BJ (cell line): ENCODE measurements at regions of chr12 and their contacts with region 1.

Region 1: GRCh38 chr12:98653866-98654493 is 8.9 kb downstream of the APAF1 start:
- DNase-seq: no peak
- H3K4me3 ChIP-seq: no peak overlapping the region
- H3K27me3 ChIP-seq: no peaks in the 10 kb centered on the region
- CTCF ChIP-seq: peak; percentile 62

Region 2: DNA sequence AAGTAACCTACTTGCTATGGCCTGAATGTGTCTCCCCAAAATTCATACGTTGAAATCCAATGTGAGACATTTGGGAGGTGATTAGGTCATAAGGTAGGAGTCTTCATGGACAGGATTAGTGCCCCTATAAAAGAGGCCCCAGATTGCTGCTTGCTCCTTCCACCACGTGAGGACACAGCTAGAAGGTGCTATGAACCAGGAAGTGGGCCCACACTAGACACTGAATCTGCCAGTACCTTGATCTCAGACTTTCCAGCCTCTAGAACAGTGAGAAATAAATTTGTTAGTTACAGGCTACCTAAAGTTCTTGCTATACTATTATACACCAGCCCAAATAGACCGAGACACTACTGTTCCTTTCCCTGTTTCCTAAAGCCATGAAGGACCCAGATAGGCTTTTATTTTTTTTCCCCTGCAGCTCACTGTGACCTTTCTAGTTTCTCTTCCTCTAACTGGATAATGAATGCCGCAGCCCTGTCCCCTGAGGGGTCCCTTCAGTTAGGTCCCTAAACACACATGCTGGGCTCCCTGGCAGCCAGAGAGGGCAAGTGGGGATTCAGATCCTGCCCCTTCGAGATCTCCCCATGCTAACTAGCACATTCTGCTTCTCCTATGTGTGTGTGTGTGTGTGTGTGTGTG is 41.2 kb before region 1 on chr12:
- CTCF ChIA-PET with region 1: no interaction called
- POLR2A ChIA-PET with region 1: no interaction called
- DNase-seq: no peak
- H3K4me3 ChIP-seq: no peak overlapping the region
- H3K27me3 ChIP-seq: no peaks in the 10 kb centered on the region
- CTCF ChIP-seq: no peak

Region 3: GRCh38 chr12:98669751-98670150 is 15.8 kb after region 1 on chr12:
- CTCF ChIA-PET with region 1: interaction called, 17 read pairs
- POLR2A ChIA-PET with region 1: interaction called, 3 read pairs
- DNase-seq: no peak
- H3K4me3 ChIP-seq: no peak overlapping the region
- H3K27me3 ChIP-seq: no peaks in the 10 kb centered on the region
- CTCF ChIP-seq: no peak